ENCODE measurements at regions of chr15 and their contacts with region 1.

Region 1: GRCh38 chr15:90221246-90221900 is 12.4 kb downstream of the CIB1 start:
- DNase-seq: peak; percentile 90 to 95
- ATAC-seq: peak; percentile 89 to 92
- H3K4me3 ChIP-seq: no peak overlapping the region
- H3K27ac ChIP-seq: peak overlapping the region; percentile 70 to 84
- H3K4me1 ChIP-seq: peaks cover 25% of the 10 kb centered on the region
- CTCF ChIP-seq: peak; percentile 91
- EP300 ChIP-seq: no peak
- POLR2A ChIP-seq: no peak
- RAD21 ChIP-seq: peak; percentile 97 to 99

Region 2: DNA sequence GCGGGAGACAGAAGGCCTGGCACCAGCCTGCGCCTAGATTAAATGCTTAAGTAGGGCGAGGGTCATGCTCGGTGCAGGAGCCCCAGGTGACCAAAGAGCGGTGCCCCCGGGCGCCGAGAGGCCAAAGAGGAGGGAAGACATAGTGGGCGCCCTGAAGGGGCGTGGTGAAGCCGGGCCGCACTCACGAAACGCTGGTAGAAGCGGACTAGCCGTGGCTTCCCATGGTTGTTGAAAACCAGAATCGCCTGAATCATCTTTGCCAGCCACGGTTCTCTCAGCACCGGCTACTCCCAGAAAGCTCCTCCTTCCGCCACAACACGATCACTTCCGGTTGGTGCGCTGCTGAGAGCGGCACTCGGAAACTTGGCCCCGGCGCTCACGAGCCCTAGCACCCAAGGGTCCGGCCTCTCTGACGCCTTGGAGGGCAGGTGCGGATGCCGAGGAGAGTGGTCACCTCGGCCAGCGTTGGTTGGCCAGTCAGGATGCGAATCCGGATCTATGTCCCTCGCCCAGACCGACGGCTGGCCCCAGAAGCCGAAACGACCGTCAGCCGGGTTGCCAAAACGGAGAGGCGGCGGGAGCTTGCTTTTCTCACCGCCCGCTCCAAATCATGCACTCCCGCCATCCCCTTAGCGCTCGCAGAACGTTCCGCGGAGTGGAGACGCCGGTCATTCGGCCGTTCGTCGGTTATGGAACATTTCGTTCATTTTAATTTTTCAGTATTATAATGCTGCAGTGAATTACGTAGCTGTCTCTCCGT is 327.5 kb before region 1 on chr15 and contains the start of gene AP3S2:
- CTCF ChIA-PET with region 1: interaction called, 10 read pairs
- POLR2A ChIA-PET with region 1: no interaction called
- DNase-seq: peak; percentile 91 to 98
- ATAC-seq: peak; percentile 95 to 97
- H3K4me3 ChIP-seq: peak within 1 kb of the TSS; percentile 87
- H3K27ac ChIP-seq: peak within 1 kb of the TSS; percentile 89 to 92
- H3K4me1 ChIP-seq: peaks cover 14% of the 10 kb centered on the region; the same call in 2 of the 3 replicates
- CTCF ChIP-seq: no peak
- EP300 ChIP-seq: no peak; a peak in 1 of 5 replicates
- POLR2A ChIP-seq: peak; percentile 81
- RAD21 ChIP-seq: peak; percentile 6 to 46; a peak in 3 of 5 replicates
- polyA plus RNA-seq, gene AP3S2: 56.7 and 85.9 TPM in 2 replicates

Region 3: DNA sequence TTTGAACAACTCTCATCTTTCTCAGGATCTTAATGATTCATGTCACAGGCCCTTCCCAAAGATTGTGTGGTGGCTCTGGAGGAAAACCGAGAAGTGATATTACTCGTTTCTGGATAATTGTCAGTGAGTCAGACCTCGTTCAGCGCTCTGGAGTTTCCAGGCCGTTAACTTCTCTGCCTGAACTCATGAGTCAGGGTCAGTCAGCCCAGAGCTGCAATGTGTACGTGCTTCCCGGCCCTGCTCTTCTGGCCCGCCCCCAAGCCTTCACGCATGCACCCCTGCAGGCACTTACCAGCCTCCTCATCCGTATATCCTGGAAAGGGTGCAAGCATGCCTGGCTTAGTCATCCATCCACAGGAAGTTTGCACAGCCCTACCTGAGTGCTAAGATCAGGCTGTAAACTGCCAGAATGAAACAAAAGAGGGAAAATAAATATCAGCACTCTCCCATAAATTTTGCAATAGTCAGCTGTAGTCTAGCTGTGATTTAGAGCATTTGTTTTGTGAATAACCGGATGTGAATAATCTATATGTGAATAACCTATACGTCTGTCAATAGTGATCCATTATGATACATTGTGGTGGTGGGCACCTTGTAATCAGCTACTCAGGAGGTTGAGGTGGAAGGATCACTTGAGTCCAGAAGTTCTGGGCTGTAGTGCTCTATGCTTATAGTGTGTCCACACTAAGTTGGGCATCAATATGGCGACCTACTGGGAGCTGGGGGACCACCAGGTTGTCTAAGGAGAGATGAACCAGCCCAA is 55.5 kb before region 1 on chr15:
- CTCF ChIA-PET with region 1: interaction called, 115 read pairs
- POLR2A ChIA-PET with region 1: no interaction called
- DNase-seq: peak; percentile 95 to 100
- ATAC-seq: peak; percentile 98 to 99
- H3K4me3 ChIP-seq: no peak overlapping the region
- H3K27ac ChIP-seq: peak overlapping the region; percentile 85 to 94
- H3K4me1 ChIP-seq: peaks cover 50% of the 10 kb centered on the region
- CTCF ChIP-seq: no peak
- EP300 ChIP-seq: peak; percentile 90 to 95
- POLR2A ChIP-seq: no peak
- RAD21 ChIP-seq: peak; percentile 16 to 55; a peak in 4 of 5 replicates

Region 4: GRCh38 chr15:90184786-90185569 is 36.4 kb before region 1 on chr15:
- CTCF ChIA-PET with region 1: interaction called, 68 read pairs
- POLR2A ChIA-PET with region 1: interaction called, 5 read pairs
- DNase-seq: peak; percentile 91 to 95
- ATAC-seq: peak; percentile 82 to 87
- H3K4me3 ChIP-seq: peak overlapping the region; percentile 62
- H3K27ac ChIP-seq: peak overlapping the region; percentile 82 to 93
- H3K4me1 ChIP-seq: peaks cover 54% of the 10 kb centered on the region
- CTCF ChIP-seq: no peak
- EP300 ChIP-seq: peak in 1 of 2 experiments; percentile 64; a peak in 1 of 5 replicates
- POLR2A ChIP-seq: peak; percentile 8; the same call in 1 of the 2 replicates
- RAD21 ChIP-seq: peak in 1 of 2 experiments; percentile 50; a peak in 2 of 5 replicates

Region 5: DNA sequence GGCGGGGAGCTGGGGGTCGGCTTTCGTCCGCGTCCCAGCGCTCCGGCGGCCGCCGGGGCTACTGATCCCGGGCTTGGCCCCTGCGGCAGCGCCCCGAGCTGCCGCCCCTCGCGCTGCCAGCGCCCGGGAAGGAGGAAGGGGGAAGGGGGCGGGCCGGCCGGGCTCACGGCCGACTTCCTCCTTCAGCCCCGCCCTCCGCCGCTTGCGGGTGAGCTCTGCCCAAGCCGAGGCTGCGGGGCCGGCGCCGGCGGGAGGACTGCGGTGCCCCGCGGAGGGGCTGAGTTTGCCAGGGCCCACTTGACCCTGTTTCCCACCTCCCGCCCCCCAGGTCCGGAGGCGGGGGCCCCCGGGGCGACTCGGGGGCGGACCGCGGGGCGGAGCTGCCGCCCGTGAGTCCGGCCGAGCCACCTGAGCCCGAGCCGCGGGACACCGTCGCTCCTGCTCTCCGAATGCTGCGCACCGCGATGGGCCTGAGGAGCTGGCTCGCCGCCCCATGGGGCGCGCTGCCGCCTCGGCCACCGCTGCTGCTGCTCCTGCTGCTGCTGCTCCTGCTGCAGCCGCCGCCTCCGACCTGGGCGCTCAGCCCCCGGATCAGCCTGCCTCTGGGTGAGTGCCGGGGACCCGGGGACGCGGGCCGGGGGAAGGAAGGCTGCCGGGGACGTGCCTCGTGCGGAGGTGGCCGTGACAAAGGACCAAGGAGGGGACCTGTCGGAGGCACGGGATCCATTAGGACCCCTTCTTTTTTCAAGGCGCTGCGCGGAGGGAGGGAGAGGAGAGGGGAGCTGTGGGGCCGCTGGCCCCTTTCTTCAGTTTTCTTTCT is 20.0 kb before region 1 on chr15 and contains the start of gene SEMA4B:
- CTCF ChIA-PET with region 1: interaction called, 288 read pairs
- POLR2A ChIA-PET with region 1: no interaction called
- DNase-seq: peak; percentile 61 to 92
- ATAC-seq: peak; percentile 88
- H3K4me3 ChIP-seq: peak within 1 kb of the TSS; percentile 80
- H3K27ac ChIP-seq: peak within 1 kb of the TSS; percentile 90 to 98
- H3K4me1 ChIP-seq: peaks cover 38% of the 10 kb centered on the region
- CTCF ChIP-seq: no peak
- EP300 ChIP-seq: no peak; a peak in 1 of 5 replicates
- POLR2A ChIP-seq: peak; percentile 73
- RAD21 ChIP-seq: no peak; a peak in 2 of 5 replicates
- polyA plus RNA-seq, gene SEMA4B: 45.3 and 61.0 TPM in 2 replicates

Region 6: GRCh38 chr15:90249203-90249863 is 28.0 kb after region 1 on chr15 and contains the start of gene TTLL13:
- CTCF ChIA-PET with region 1: interaction called, 11 read pairs
- POLR2A ChIA-PET with region 1: interaction called, 3 read pairs
- DNase-seq: peak; percentile 92 to 95
- ATAC-seq: peak; percentile 97 to 98
- H3K4me3 ChIP-seq: peak within 1 kb of the TSS; percentile 69
- H3K27ac ChIP-seq: peak within 1 kb of the TSS; percentile 83 to 86
- H3K4me1 ChIP-seq: peaks cover 12% of the 10 kb centered on the region
- CTCF ChIP-seq: no peak
- EP300 ChIP-seq: no peak
- POLR2A ChIP-seq: peak; percentile 93
- RAD21 ChIP-seq: no peak
- polyA plus RNA-seq, gene TTLL13: 0.56 and 0.61 TPM in 2 replicates